ENCODE measurements at regions of chr6 and their contacts with region 1.

Region 1: GRCh38 chr6:126033696-126034095 is 47.4 kb downstream of the TRMT11 start:
- DNase-seq: peak in 1 of 2 donors; percentile 67
- H3K4me3 ChIP-seq: no peak overlapping the region
- H3K27ac ChIP-seq: no peak overlapping the region
- H3K4me1 ChIP-seq: peaks cover 0 to 3% of the 10 kb centered on the region in 2 donors
- H3K27me3 ChIP-seq: no peaks in the 10 kb centered on the region
- CTCF ChIP-seq: peak; percentile 47 to 67 (median 50)

Region 2: GRCh38 chr6:126339796-126340609 is 306.3 kb after region 1 on chr6 and contains the start of gene CENPW:
- intact Hi-C with region 1: loop called (anchors 10 kb)
- DNase-seq: peak; percentile 23 to 86
- H3K4me3 ChIP-seq: peak within 1 kb of the TSS; percentile 77 to 91
- H3K27ac ChIP-seq: peak within 1 kb of the TSS in 1 of 2 donors; percentile 16
- H3K4me1 ChIP-seq: peaks cover 4 to 7% of the 10 kb centered on the region in 2 donors
- H3K27me3 ChIP-seq: no peaks in the 10 kb centered on the region
- CTCF ChIP-seq: no peak
- total RNA-seq, gene CENPW: not detected